CD8-positive, alpha-beta T cell (primary cell): ENCODE measurements at regions of chr17 and their contacts with region 1.

Region 1: GRCh38 chr17:52653014-52653413 is 494.5 kb upstream of the CA10 start:
- DNase-seq: no peak
- ATAC-seq: no peak
- H3K4me3 ChIP-seq: no peak overlapping the region
- H3K4me3 Mint-ChIP-seq: no peak overlapping the region
- H3K27ac ChIP-seq: no peak overlapping the region
- H3K27ac Mint-ChIP-seq: no peak overlapping the region
- H3K4me1 ChIP-seq: no peaks in the 10 kb centered on the region
- H3K4me1 Mint-ChIP-seq: no peaks in the 10 kb centered on the region
- H3K27me3 ChIP-seq: no peaks in the 10 kb centered on the region
- H3K27me3 Mint-ChIP-seq: no peaks in the 10 kb centered on the region
- CTCF ChIP-seq: no peak

Region 2: GRCh38 chr17:52709724-52710123 is 56.7 kb after region 1 on chr17:
- CTCF ChIA-PET with region 1: no interaction called
- POLR2A ChIA-PET with region 1: no interaction called
- intact Hi-C with region 1: loop called in 1 of 2 experiments (anchors 10 kb)
- DNase-seq: no peak
- ATAC-seq: no peak
- H3K4me3 ChIP-seq: no peak overlapping the region
- H3K4me3 Mint-ChIP-seq: no peak overlapping the region
- H3K27ac ChIP-seq: no peak overlapping the region
- H3K27ac Mint-ChIP-seq: no peak overlapping the region
- H3K4me1 ChIP-seq: no peaks in the 10 kb centered on the region
- H3K4me1 Mint-ChIP-seq: no peaks in the 10 kb centered on the region
- H3K27me3 ChIP-seq: no peaks in the 10 kb centered on the region
- H3K27me3 Mint-ChIP-seq: no peaks in the 10 kb centered on the region
- CTCF ChIP-seq: no peak